H1 (cell line): ENCODE measurements at regions of chr19 and their contacts with region 1.

Region 1: GRCh38 chr19:54882758-54883157 is 8.7 kb downstream of the FCAR start:
- DNase-seq: no peak
- H3K4me3 ChIP-seq: no peak overlapping the region
- H3K27ac ChIP-seq: no peak overlapping the region
- H3K4me1 ChIP-seq: no peaks in the 10 kb centered on the region; a peak in 1 of 7 replicates
- H3K27me3 ChIP-seq: peaks cover 0 to 3% (median 0%) of the 10 kb centered on the region in 4 experiments; a peak in 1 of 7 replicates
- CTCF ChIP-seq: peak in 1 of 3 experiments; percentile 26; a peak in 2 of 4 replicates
- EP300 ChIP-seq: no peak
- POLR2A ChIP-seq: no peak
- RAD21 ChIP-seq: peak in 1 of 2 experiments; percentile 34; a peak in 1 of 4 replicates

Region 2: DNA sequence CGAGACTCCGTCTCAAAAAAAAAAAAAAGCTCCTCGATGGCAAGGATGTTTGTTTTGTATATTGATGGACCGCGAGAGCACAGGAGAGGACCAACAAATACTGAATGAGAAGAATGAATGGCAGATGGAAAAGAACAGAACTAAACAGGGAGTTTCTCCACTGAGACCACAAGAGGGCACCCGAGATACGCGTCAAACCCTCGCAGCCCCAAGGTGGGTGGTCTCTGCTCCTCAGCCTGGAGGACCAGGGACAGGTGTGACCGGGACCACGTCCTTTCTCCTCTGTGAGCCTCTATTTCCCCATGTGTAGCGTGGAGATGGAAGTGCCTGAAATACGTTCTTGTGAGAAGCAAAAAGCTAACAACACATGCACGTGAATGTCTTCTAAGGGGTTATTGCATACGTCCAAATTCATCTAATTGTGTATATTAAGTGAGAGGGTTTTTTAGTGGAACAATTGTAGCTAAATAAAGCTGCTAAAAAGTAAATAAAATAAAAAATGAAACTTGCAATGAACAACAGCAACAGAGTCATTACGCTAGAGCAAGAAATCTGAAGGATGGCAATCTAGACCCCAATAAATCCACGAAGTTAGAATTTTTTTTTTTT is 401.3 kb before region 1 on chr19:
- CTCF ChIA-PET with region 1: interaction called, 16 read pairs
- POLR2A ChIA-PET with region 1: no interaction called
- DNase-seq: peak in 1 of 2 experiments; percentile 82
- H3K4me3 ChIP-seq: no peak overlapping the region
- H3K27ac ChIP-seq: no peak overlapping the region
- H3K4me1 ChIP-seq: no peaks in the 10 kb centered on the region
- H3K27me3 ChIP-seq: no peaks in the 10 kb centered on the region
- CTCF ChIP-seq: peak; percentile 63 to 81 (median 66)
- EP300 ChIP-seq: no peak
- POLR2A ChIP-seq: no peak
- RAD21 ChIP-seq: peak; percentile 79 to 81

Region 3: DNA sequence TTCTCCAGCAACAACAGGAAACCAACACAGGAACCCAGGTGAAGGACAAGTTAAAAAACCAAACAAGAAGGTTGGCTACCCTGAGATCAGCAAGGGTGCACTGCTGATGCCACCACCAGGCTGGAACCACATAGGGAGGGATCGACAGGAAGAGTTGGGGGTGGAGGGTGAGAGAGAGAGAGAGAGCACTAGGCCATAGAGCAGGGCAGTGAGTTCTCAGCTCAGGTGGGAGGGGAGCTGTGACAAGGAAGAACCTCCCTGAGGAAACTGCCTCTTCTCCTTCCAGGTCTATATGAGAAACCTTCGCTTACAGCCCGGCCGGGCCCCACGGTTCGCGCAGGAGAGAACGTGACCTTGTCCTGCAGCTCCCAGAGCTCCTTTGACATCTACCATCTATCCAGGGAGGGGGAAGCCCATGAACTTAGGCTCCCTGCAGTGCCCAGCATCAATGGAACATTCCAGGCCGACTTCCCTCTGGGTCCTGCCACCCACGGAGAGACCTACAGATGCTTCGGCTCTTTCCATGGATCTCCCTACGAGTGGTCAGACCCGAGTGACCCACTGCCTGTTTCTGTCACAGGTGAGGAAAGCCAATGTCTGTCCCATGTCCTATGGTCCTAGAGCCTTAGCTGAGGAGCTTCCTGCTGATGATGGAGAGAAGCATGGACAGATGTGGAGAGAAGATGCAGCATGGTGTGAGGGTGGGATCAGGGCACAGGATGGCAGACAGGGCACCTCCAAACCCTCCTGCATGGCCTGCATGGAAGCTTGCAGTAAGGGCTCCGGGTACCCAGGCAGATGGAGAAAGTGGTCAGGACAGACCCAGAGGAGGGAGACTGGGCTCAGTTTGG is 76.9 kb before region 1 on chr19:
- CTCF ChIA-PET with region 1: no interaction called
- POLR2A ChIA-PET with region 1: no interaction called
- DNase-seq: no peak
- H3K4me3 ChIP-seq: no peak overlapping the region
- H3K27ac ChIP-seq: no peak overlapping the region
- H3K4me1 ChIP-seq: no peaks in the 10 kb centered on the region
- H3K27me3 ChIP-seq: no peaks in the 10 kb centered on the region
- CTCF ChIP-seq: no peak
- EP300 ChIP-seq: no peak
- POLR2A ChIP-seq: no peak
- RAD21 ChIP-seq: no peak

Region 4: GRCh38 chr19:54905803-54906511 is 23.2 kb after region 1 on chr19 and contains the start of gene NCR1:
- CTCF ChIA-PET with region 1: interaction called, 14 read pairs
- POLR2A ChIA-PET with region 1: no interaction called
- DNase-seq: no peak
- H3K4me3 ChIP-seq: no peak within 1 kb of the TSS
- H3K27ac ChIP-seq: no peak within 1 kb of the TSS
- H3K4me1 ChIP-seq: peaks cover 2 to 10% (median 5%) of the 10 kb centered on the region in 4 experiments; a peak in 4 of 7 replicates
- H3K27me3 ChIP-seq: no peaks in the 10 kb centered on the region
- CTCF ChIP-seq: no peak
- EP300 ChIP-seq: no peak
- POLR2A ChIP-seq: no peak
- RAD21 ChIP-seq: no peak
- total RNA-seq, gene NCR1: 4.6 and 5.1 TPM in 2 replicates

Region 5: GRCh38 chr19:54916822-54917221 is 34.1 kb after region 1 on chr19:
- CTCF ChIA-PET with region 1: interaction called, 39 read pairs
- POLR2A ChIA-PET with region 1: interaction called, 3 read pairs
- DNase-seq: no peak
- H3K4me3 ChIP-seq: no peak overlapping the region
- H3K27ac ChIP-seq: no peak overlapping the region
- H3K4me1 ChIP-seq: no peaks in the 10 kb centered on the region
- H3K27me3 ChIP-seq: no peaks in the 10 kb centered on the region
- CTCF ChIP-seq: no peak
- EP300 ChIP-seq: no peak
- POLR2A ChIP-seq: no peak
- RAD21 ChIP-seq: no peak

Region 6: DNA sequence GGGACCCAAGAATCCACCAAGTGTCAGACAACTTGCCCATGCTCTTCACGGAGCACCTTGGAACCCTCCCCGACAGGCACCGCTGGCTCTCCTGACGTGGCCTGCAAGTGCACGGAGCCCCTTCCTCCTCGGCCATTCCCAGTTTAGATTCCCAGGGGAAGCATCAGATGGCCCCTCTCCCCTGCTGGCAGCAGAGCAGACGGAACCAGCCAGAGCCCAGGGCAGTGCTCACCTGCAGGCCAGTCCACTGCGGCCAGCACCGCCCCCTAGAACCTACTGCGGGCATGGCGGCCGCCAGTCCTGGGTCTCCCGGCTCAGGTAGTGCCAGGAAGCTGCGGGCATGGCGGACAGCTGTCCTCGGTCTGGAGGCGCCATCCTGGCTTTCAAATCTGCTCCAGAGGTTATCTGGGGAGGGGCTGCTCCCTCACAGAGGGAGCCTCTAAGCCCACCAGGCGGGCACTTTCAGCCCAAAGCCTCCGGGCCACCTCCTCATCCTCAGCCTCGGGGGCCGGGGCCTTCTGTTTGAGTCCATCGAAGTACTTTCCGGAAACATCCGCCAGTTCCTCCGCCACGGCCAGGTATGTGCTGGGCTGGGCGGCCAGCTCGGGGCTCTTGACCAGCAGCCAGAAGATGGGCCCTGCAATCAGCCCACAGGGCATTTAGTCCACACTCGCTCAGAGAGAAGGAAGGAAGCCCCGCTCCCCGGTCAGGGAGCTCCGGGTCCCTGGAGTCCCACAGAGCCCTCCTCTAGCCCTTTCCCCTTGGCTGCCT is 162.1 kb after region 1 on chr19:
- CTCF ChIA-PET with region 1: interaction called, 10 read pairs
- POLR2A ChIA-PET with region 1: interaction called, 3 read pairs
- DNase-seq: no peak
- H3K4me3 ChIP-seq: no peak overlapping the region
- H3K27ac ChIP-seq: no peak overlapping the region
- H3K4me1 ChIP-seq: no peaks in the 10 kb centered on the region; a peak in 1 of 7 replicates
- H3K27me3 ChIP-seq: no peaks in the 10 kb centered on the region; a peak in 1 of 7 replicates
- CTCF ChIP-seq: peak in 1 of 3 experiments; percentile 37; a peak in 2 of 4 replicates
- EP300 ChIP-seq: no peak
- POLR2A ChIP-seq: no peak
- RAD21 ChIP-seq: peak; percentile 31 to 51; a peak in 2 of 4 replicates

Region 7: DNA sequence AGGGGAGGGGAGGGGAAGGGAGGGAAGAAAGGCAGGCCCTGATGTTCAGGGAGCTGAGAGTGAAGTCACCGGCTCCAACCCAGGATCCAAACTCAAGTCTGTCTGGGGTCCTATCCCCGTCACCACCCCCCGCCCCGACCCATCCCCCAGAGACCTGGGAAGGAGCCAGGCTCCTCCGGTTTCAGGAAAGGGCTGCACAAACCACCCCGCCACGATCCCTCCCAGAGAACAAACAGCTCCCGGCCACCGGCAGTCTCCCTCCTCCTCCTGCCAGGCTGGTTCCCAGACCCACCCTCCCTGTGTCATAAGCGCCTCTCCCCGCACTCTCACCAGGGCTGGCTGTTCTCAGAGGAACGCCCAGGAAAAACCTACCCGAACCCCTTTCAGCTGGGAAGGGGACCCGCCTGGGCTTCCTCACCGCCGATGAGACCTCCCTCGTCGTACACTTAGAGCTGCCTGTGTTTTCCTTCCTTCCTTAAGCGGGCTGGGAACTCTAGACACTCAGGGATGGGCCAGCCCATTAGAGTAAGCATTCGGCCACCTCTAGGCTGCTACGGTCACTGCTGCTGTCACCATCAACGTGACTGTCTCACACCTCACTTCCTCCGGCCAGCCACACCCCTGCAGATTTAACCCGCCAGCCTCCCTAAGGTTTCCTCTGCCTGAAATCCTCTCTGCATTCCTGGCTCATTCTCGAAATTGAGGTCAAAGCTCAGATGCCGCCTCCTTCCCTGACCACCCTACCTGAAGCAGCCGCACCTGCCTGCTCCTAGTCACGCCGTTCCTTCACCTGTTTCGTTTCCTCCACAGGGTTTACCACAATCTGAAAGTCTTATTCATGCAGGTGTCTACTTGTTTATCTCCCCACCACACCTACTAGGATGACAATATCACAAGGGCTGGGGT is 186.4 kb after region 1 on chr19:
- CTCF ChIA-PET with region 1: interaction called, 20 read pairs
- POLR2A ChIA-PET with region 1: interaction called, 6 read pairs
- DNase-seq: peak in 1 of 2 experiments; percentile 68
- H3K4me3 ChIP-seq: peak overlapping the region; percentile 16 to 60 (median 42)
- H3K27ac ChIP-seq: no peak overlapping the region
- H3K4me1 ChIP-seq: peaks cover 0 to 10% (median 5%) of the 10 kb centered on the region in 4 experiments; a peak in 6 of 7 replicates
- H3K27me3 ChIP-seq: peaks cover 18 to 82% (median 59%) of the 10 kb centered on the region in 4 experiments
- CTCF ChIP-seq: no peak
- EP300 ChIP-seq: no peak
- POLR2A ChIP-seq: no peak
- RAD21 ChIP-seq: 0 out of 4 replicates have a peak, but pooled peaks of 1 of the 2 experiments have one; percentile 1